Stomach (tissue), 19 donors: ENCODE measurements at regions of chr10 and their contacts with region 1.

Region 1: GRCh38 chr10:32790483-32790882 is 167.5 kb downstream of the ITGB1 start:
- DNase-seq: no peak
- H3K4me3 ChIP-seq: no peak overlapping the region
- H3K27ac ChIP-seq: no peak overlapping the region
- H3K4me1 ChIP-seq: peaks cover 0 to 6% (median 0%) of the 10 kb centered on the region in 4 donors
- H3K27me3 ChIP-seq: no peaks in the 10 kb centered on the region
- CTCF ChIP-seq: no peak
- EP300 ChIP-seq: no peak
- POLR2A ChIP-seq: no peak

Region 2: GRCh38 chr10:33010132-33011037 is 219.9 kb after region 1 on chr10:
- intact Hi-C with region 1: loop called (anchors 5 kb)
- DNase-seq: peak in 1 of 2 donors; percentile 38
- H3K4me3 ChIP-seq: no peak overlapping the region
- H3K27ac ChIP-seq: no peak overlapping the region
- H3K4me1 ChIP-seq: peaks cover 0 to 20% (median 12%) of the 10 kb centered on the region in 4 donors
- H3K27me3 ChIP-seq: no peaks in the 10 kb centered on the region
- CTCF ChIP-seq: no peak
- EP300 ChIP-seq: no peak
- POLR2A ChIP-seq: no peak